PC-9 (cell line): ENCODE measurements at regions of chr15 and their contacts with region 1.

Region 1: GRCh38 chr15:74950078-74951000 is 6.2 kb downstream of the RPP25 start:
- DNase-seq: peak; percentile 67 to 75
- H3K4me3 ChIP-seq: no peak overlapping the region
- H3K27ac ChIP-seq: no peak overlapping the region
- H3K4me1 ChIP-seq: peaks cover 23% of the 10 kb centered on the region
- H3K27me3 ChIP-seq: no peaks in the 10 kb centered on the region
- CTCF ChIP-seq: peak; percentile 99

Region 2: DNA sequence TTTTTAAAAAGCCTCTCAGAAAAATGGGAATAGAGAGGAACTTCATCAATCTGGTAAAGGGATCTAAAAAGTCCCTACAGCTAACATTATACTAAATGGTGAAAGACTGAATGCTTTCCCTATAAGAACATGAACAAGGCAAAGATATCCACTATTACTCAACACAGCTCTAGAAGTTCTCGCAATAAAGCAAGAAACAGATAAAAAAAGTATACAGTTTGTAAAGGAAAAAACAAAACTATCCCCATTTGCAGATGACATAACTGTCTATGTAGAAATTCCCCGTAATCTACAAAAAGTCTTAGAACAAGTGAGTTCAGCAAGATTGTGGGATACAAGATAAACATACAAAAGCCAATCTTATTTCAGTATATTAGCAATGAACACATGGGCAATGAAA is 269.9 kb before region 1 on chr15:
- CTCF ChIA-PET with region 1: interaction called, 10 read pairs
- POLR2A ChIA-PET with region 1: no interaction called
- intact Hi-C with region 1: no loop called
- DNase-seq: no peak
- H3K4me3 ChIP-seq: no peak overlapping the region
- H3K27ac ChIP-seq: no peak overlapping the region
- H3K4me1 ChIP-seq: no peaks in the 10 kb centered on the region
- H3K27me3 ChIP-seq: no peaks in the 10 kb centered on the region
- CTCF ChIP-seq: no peak

Region 3: GRCh38 chr15:75073197-75073596 is 122.9 kb after region 1 on chr15:
- CTCF ChIA-PET with region 1: no interaction called
- POLR2A ChIA-PET with region 1: no interaction called
- intact Hi-C with region 1: no loop called
- DNase-seq: no peak
- H3K4me3 ChIP-seq: no peak overlapping the region
- H3K27ac ChIP-seq: no peak overlapping the region
- H3K4me1 ChIP-seq: 0 out of 2 replicates have a peak, but pooled peaks cover 5% of the 10 kb centered on the region
- H3K27me3 ChIP-seq: no peaks in the 10 kb centered on the region
- CTCF ChIP-seq: no peak

Region 4: GRCh38 chr15:75532413-75533147 is 582.2 kb after region 1 on chr15:
- CTCF ChIA-PET with region 1: no interaction called
- POLR2A ChIA-PET with region 1: no interaction called
- intact Hi-C with region 1: no loop called
- DNase-seq: peak; percentile 36 to 59
- H3K4me3 ChIP-seq: peak overlapping the region; percentile 2; the same call in 1 of the 2 replicates
- H3K27ac ChIP-seq: peak overlapping the region; percentile 68
- H3K4me1 ChIP-seq: peaks cover 32% of the 10 kb centered on the region
- H3K27me3 ChIP-seq: no peaks in the 10 kb centered on the region
- CTCF ChIP-seq: peak; percentile 66